ENCODE measurements at regions of chr15 and their contacts with region 1.

Region 1: GRCh38 chr15:67101911-67102598 is 36.7 kb downstream of the SMAD3 start:
- DNase-seq: peak in 1 of 9 donors; percentile 51
- ATAC-seq: peak; percentile 62
- H3K4me3 ChIP-seq: peak overlapping the region; percentile 15
- H3K4me3 Mint-ChIP-seq: no peak overlapping the region
- H3K27ac ChIP-seq: peak overlapping the region; percentile 61
- H3K27ac Mint-ChIP-seq: no peak overlapping the region
- H3K4me1 ChIP-seq: peaks cover 92 to 95% of the 10 kb centered on the region in 2 donors
- H3K4me1 Mint-ChIP-seq: peaks cover 26 to 64% (median 27%) of the 10 kb centered on the region in 7 donors
- H3K27me3 ChIP-seq: no peaks in the 10 kb centered on the region
- H3K27me3 Mint-ChIP-seq: no peaks in the 10 kb centered on the region

Region 2: DNA sequence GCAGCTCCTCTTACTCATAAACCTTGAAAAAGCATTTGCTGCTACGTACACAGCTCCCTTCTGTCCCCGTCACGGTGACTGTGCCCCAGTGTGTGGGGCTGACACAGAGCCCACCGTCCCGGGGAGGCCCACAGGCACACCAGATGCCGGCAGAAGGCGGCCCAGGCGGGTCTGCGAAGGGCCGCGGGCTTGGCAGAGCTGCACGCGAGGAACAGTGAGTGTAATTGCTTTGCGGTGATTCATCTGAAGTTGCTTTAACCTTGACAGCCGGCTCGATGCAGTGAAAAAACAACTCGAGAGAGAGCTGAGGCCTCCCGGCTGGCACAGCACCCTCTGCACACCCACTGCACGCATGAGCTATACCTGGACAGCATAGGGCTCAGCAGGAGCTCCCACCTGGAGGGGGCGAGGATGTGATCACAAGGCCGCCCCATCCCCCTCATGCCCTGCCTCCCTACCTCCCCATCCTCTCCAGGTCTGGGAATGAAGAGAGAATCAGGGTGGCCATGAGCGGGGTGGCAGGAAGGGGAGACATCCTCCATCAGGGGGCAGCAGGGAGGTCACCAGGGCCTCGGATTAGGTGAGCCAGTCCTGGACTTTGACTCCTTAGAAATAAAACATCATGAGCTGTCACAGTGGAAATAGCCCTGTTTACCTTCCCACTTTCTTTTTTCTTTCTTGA is 1021.2 kb before region 1 on chr15:
- CTCF ChIA-PET with region 1: no interaction called
- POLR2A ChIA-PET with region 1: no interaction called
- intact Hi-C with region 1: no loop called
- DNase-seq: no peak
- ATAC-seq: no peak
- H3K4me3 ChIP-seq: no peak overlapping the region
- H3K4me3 Mint-ChIP-seq: no peak overlapping the region
- H3K27ac ChIP-seq: no peak overlapping the region
- H3K27ac Mint-ChIP-seq: no peak overlapping the region
- H3K4me1 ChIP-seq: no peaks in the 10 kb centered on the region
- H3K4me1 Mint-ChIP-seq: no peaks in the 10 kb centered on the region
- H3K27me3 ChIP-seq: no peaks in the 10 kb centered on the region
- H3K27me3 Mint-ChIP-seq: peaks cover 9 to 26% (median 19%) of the 10 kb centered on the region in 5 donors

Region 3: DNA sequence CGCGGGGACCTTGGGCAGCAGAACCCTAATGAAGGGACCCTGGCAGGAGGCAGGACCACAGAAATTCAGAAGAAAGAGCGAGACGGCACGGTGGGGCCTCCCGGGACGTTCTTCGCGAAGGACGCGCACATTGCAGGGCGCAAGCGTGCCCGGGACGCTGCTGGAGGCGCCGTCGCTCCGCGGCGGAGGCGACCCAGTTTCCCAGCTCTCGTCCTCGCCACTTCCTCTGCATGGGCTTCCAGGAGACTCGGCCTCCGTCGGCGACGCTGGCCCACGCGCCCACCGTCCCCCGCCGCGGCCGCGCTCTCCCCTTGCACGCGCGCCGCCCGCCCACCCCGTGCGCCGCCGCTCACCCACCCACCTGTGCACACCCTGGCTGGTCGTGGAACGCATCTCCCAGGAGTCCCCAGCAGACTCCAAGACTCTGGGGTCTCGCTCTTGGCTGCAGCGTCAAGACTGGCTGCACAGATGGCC is 68.4 kb before region 1 on chr15:
- CTCF ChIA-PET with region 1: no interaction called
- POLR2A ChIA-PET with region 1: no interaction called
- intact Hi-C with region 1: no loop called
- DNase-seq: peak in 6 of 9 donors; percentile 10 to 35 (median 24)
- ATAC-seq: peak; percentile 56
- H3K4me3 ChIP-seq: peak overlapping the region; percentile 41
- H3K4me3 Mint-ChIP-seq: peak overlapping the region in 6 of 10 donors; percentile 30 to 75 (median 68)
- H3K27ac ChIP-seq: no peak overlapping the region
- H3K27ac Mint-ChIP-seq: peak overlapping the region in 3 of 9 donors; percentile 20 to 41 (median 20)
- H3K4me1 ChIP-seq: peaks cover 4 to 12% of the 10 kb centered on the region in 2 donors
- H3K4me1 Mint-ChIP-seq: peaks cover 3 to 24% (median 14%) of the 10 kb centered on the region in 7 donors
- H3K27me3 ChIP-seq: no peaks in the 10 kb centered on the region
- H3K27me3 Mint-ChIP-seq: peaks cover 0 to 16% (median 0%) of the 10 kb centered on the region in 5 donors

Region 4: GRCh38 chr15:67074886-67075229 is 27.2 kb before region 1 on chr15:
- CTCF ChIA-PET with region 1: interaction called, 5 read pairs
- POLR2A ChIA-PET with region 1: interaction called, 5 read pairs
- intact Hi-C with region 1: loop called in 1 of 2 experiments (anchors 2 kb)
- DNase-seq: no peak
- ATAC-seq: peak; percentile 15
- H3K4me3 ChIP-seq: no peak overlapping the region
- H3K4me3 Mint-ChIP-seq: peak overlapping the region in 9 of 10 donors; percentile 36 to 84 (median 70)
- H3K27ac ChIP-seq: no peak overlapping the region
- H3K27ac Mint-ChIP-seq: peak overlapping the region in 7 of 9 donors; percentile 63 to 91 (median 80)
- H3K4me1 ChIP-seq: peaks cover 50 to 79% of the 10 kb centered on the region in 2 donors
- H3K4me1 Mint-ChIP-seq: peaks cover 34 to 89% (median 76%) of the 10 kb centered on the region in 7 donors
- H3K27me3 ChIP-seq: no peaks in the 10 kb centered on the region
- H3K27me3 Mint-ChIP-seq: no peaks in the 10 kb centered on the region

Region 5: GRCh38 chr15:67085818-67086636 is 16.0 kb before region 1 on chr15:
- CTCF ChIA-PET with region 1: interaction called, 8 read pairs
- POLR2A ChIA-PET with region 1: interaction called, 14 read pairs
- intact Hi-C with region 1: loop called (anchors 1 kb)
- DNase-seq: no peak
- ATAC-seq: peak; percentile 75
- H3K4me3 ChIP-seq: peak overlapping the region; percentile 14
- H3K4me3 Mint-ChIP-seq: peak overlapping the region in 9 of 10 donors; percentile 3 to 98 (median 56)
- H3K27ac ChIP-seq: no peak overlapping the region
- H3K27ac Mint-ChIP-seq: peak overlapping the region in 5 of 9 donors; percentile 67 to 95 (median 78)
- H3K4me1 ChIP-seq: peaks cover 74 to 91% of the 10 kb centered on the region in 2 donors
- H3K4me1 Mint-ChIP-seq: peaks cover 56 to 97% (median 93%) of the 10 kb centered on the region in 7 donors
- H3K27me3 ChIP-seq: no peaks in the 10 kb centered on the region
- H3K27me3 Mint-ChIP-seq: no peaks in the 10 kb centered on the region

Region 6: GRCh38 chr15:67120839-67121643 is 19.0 kb after region 1 on chr15:
- CTCF ChIA-PET with region 1: interaction called, 5 read pairs
- POLR2A ChIA-PET with region 1: interaction called, 60 read pairs
- intact Hi-C with region 1: loop called (anchors 1 kb)
- DNase-seq: peak; percentile 54 to 90 (median 71)
- ATAC-seq: peak; percentile 93
- H3K4me3 ChIP-seq: peak overlapping the region; percentile 48
- H3K4me3 Mint-ChIP-seq: peak overlapping the region; percentile 78 to 90 (median 84)
- H3K27ac ChIP-seq: peak overlapping the region; percentile 78
- H3K27ac Mint-ChIP-seq: peak overlapping the region; percentile 88 to 97 (median 95)
- H3K4me1 ChIP-seq: peaks cover 58 to 66% of the 10 kb centered on the region in 2 donors
- H3K4me1 Mint-ChIP-seq: peaks cover 53 to 95% (median 82%) of the 10 kb centered on the region in 7 donors
- H3K27me3 ChIP-seq: no peaks in the 10 kb centered on the region
- H3K27me3 Mint-ChIP-seq: no peaks in the 10 kb centered on the region

Region 7: DNA sequence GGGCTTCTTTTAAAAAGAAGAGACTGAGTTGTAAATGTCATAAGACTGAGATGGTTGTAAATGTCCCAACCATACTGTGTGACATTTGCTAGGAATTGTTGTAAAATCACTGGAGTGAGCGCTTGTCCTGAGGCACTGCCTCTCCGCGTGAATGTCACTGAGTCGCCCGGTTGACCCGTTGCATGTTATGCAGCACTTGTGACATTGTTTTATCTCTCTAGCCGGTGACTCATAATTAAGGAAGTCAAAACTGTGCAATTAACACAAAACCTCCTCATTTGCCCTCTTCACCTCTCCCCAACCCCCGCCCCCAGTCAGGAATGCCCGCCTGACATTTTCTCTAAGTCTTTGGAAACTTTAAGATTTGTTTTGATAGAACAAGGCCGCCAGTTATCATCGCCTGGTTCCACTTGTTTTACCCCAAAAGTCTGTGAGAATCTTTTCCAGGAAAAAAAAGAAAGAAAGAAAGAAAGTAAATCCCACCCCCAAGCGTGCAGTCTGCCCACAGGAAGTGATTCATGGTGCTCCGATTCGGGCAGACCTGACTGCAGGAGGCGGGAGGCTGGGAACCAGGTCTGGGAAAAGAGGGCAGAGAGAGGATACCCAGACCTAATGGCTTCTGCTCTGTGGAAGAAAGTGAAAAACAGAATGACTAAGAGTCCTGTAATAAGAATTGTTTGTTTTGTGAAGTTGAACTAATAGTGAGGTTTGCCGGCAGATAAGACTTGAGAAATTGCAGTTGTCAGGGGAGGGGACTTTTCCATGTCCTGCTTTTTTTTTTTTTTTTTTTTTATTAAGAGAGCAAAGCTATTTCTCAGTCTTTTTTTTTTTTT is 48.2 kb after region 1 on chr15:
- CTCF ChIA-PET with region 1: no interaction called
- POLR2A ChIA-PET with region 1: interaction called, 3 read pairs
- intact Hi-C with region 1: loop called (anchors 2 kb)
- DNase-seq: peak in 1 of 9 donors; percentile 61
- ATAC-seq: peak; percentile 61
- H3K4me3 ChIP-seq: peak overlapping the region; percentile 0
- H3K4me3 Mint-ChIP-seq: peak overlapping the region; percentile 4 to 74 (median 49)
- H3K27ac ChIP-seq: no peak overlapping the region
- H3K27ac Mint-ChIP-seq: peak overlapping the region in 6 of 9 donors; percentile 7 to 57 (median 30)
- H3K4me1 ChIP-seq: peaks cover 35 to 48% of the 10 kb centered on the region in 2 donors
- H3K4me1 Mint-ChIP-seq: peaks cover 48 to 78% (median 65%) of the 10 kb centered on the region in 7 donors
- H3K27me3 ChIP-seq: no peaks in the 10 kb centered on the region
- H3K27me3 Mint-ChIP-seq: no peaks in the 10 kb centered on the region